ENCODE measurements at regions of chr21 and their contacts with region 1.

Region 1: GRCh38 chr21:37582590-37582989 is 216.0 kb downstream of the DYRK1A start:
- DNase-seq: peak; percentile 37 to 78 (median 60)
- ATAC-seq: peak; percentile 99
- H3K4me3 ChIP-seq: no peak overlapping the region
- H3K27ac ChIP-seq: no peak overlapping the region
- H3K4me1 ChIP-seq: no peaks in the 10 kb centered on the region; a peak in 1 of 5 replicates
- H3K27me3 ChIP-seq: peaks cover 0 to 6% of the 10 kb centered on the region in 2 experiments; a peak in 1 of 5 replicates
- CTCF ChIP-seq: peak; percentile 78 to 93 (median 91)
- EP300 ChIP-seq: no peak; the same call in none of the 2 replicates
- POLR2A ChIP-seq: no peak
- RAD21 ChIP-seq: peak; percentile 67 to 95

Region 2: DNA sequence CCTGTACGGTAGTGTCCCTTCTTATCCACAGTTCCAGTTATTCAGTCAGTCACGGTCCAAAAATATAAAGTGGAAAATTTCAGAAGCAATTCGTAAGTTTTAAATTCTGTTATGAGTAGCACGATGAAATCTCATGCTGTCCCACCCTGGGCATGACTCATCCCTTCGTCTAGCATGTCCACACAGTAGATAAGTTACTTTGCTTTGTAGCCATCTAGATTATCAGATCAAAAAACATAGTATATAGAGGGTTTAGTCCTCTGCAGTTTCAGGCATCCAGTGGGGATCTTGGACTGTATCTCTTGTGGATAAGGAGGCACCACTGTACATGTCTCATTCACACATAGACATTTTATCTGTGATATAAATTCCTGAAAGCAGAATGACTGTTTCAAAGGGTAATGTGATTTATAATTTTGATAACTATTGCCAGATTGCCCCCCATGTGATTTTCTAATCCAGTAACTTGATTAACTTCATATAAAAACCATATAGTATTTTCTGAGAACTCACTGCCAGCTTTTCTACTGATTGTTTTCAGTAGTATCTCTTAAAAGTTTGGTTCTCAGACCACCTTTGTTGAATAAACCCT is 72.7 kb before region 1 on chr21:
- CTCF ChIA-PET with region 1: no interaction called
- POLR2A ChIA-PET with region 1: no interaction called
- in situ Hi-C with region 1: no loop called
- intact Hi-C with region 1: loop called (anchors 5 kb)
- DNase-seq: peak in 2 of 4 experiments; percentile 35 to 63
- ATAC-seq: peak; percentile 68
- H3K4me3 ChIP-seq: no peak overlapping the region
- H3K27ac ChIP-seq: peak overlapping the region; percentile 51; the same call in 2 of the 3 replicates
- H3K4me1 ChIP-seq: peaks cover 4 to 17% of the 10 kb centered on the region in 2 experiments; a peak in 3 of 5 replicates
- H3K27me3 ChIP-seq: no peaks in the 10 kb centered on the region
- CTCF ChIP-seq: no peak
- EP300 ChIP-seq: peak; percentile 30; the same call in 1 of the 2 replicates
- POLR2A ChIP-seq: no peak
- RAD21 ChIP-seq: no peak

Region 3: DNA sequence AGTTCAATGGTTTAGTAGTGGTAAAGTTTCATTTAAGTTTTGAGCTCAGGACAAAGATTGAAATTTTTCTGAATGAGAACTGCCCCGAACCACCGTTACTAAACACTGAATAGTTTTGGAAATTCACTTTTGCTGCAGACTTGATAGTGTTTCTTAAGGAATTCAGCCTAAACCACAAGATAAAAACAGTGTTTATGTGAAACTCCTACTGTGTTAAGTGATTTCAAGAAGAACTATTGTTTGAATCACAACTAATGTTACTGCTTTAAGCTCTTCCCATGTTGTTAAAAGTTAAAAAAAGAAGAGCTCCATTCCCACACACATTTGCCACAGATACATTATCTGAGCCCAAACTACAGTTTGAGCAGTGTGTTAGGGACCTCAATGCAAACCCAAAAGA is 56.8 kb before region 1 on chr21:
- CTCF ChIA-PET with region 1: no interaction called
- POLR2A ChIA-PET with region 1: no interaction called
- in situ Hi-C with region 1: no loop called
- intact Hi-C with region 1: loop called (anchors 5 kb)
- DNase-seq: no peak
- ATAC-seq: no peak
- H3K4me3 ChIP-seq: no peak overlapping the region
- H3K27ac ChIP-seq: no peak overlapping the region
- H3K4me1 ChIP-seq: peaks cover 1 to 3% of the 10 kb centered on the region in 2 experiments; a peak in 3 of 5 replicates
- H3K27me3 ChIP-seq: no peaks in the 10 kb centered on the region
- CTCF ChIP-seq: no peak
- EP300 ChIP-seq: no peak
- POLR2A ChIP-seq: no peak
- RAD21 ChIP-seq: no peak

Region 4: GRCh38 chr21:37593740-37594471 is 11.3 kb after region 1 on chr21:
- CTCF ChIA-PET with region 1: no interaction called
- POLR2A ChIA-PET with region 1: interaction called, 10 read pairs
- in situ Hi-C with region 1: no loop called
- intact Hi-C with region 1: no loop called
- DNase-seq: no peak
- ATAC-seq: peak; percentile 54
- H3K4me3 ChIP-seq: no peak overlapping the region
- H3K27ac ChIP-seq: no peak overlapping the region
- H3K4me1 ChIP-seq: peaks cover 0 to 6% of the 10 kb centered on the region in 2 experiments; a peak in 3 of 5 replicates
- H3K27me3 ChIP-seq: peaks cover 30 to 36% of the 10 kb centered on the region in 2 experiments
- CTCF ChIP-seq: no peak
- EP300 ChIP-seq: no peak
- POLR2A ChIP-seq: no peak
- RAD21 ChIP-seq: no peak